ENCODE measurements at regions of chr7 and their contacts with region 1.

Region 1: GRCh38 chr7:36487756-36488336 is 98.2 kb downstream of the ANLN start:
- DNase-seq: peak; percentile 69
- H3K4me3 ChIP-seq: no peak overlapping the region
- H3K27ac ChIP-seq: no peak overlapping the region
- H3K4me1 ChIP-seq: no peaks in the 10 kb centered on the region
- H3K27me3 ChIP-seq: peaks cover 43% of the 10 kb centered on the region

Region 2: DNA sequence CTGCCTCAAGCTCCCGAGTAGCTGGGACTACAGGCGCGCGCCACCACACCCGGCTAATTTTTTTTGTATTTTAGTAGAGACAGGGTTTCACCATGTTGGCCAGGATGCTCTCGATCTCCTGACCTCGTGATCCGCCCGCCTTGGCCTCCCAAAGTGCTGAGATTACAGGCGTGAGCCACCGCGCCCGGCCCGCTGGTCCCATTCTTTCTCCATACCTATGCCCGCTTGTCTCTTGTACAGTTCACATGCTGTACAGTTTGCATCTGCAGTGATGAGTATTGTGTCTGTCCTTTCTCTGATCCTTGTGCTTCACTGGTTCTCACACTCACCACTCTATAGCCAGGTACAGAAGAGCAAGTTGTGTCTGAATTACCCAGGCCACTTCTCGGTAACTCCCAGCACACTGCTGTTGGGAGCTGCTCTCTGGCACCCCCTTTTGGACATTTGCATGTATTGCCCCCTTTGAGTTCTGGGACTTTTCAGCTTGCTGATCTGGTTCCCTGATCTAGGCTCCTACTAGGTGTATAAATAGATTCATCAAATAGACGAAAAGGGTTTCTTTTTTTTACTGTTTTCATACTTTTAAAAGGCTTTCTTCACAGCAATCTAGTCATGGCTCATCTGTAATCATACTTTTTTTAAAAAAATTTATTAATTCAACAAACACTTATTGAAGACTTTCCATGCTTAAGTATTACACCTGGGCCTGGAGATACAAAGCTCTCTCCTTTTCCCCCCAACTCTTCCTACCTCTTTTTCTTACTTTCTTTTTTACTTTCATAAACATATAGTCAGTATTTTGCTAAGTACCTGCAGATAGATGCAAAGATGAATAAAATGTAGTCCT is 183.0 kb after region 1 on chr7:
- in situ Hi-C with region 1: loop called (anchors 10 kb)
- DNase-seq: peak; percentile 69
- H3K4me3 ChIP-seq: no peak overlapping the region
- H3K27ac ChIP-seq: no peak overlapping the region
- H3K4me1 ChIP-seq: peaks cover 15% of the 10 kb centered on the region; the same call in 1 of the 2 replicates
- H3K27me3 ChIP-seq: peaks cover 5% of the 10 kb centered on the region

Region 3: DNA sequence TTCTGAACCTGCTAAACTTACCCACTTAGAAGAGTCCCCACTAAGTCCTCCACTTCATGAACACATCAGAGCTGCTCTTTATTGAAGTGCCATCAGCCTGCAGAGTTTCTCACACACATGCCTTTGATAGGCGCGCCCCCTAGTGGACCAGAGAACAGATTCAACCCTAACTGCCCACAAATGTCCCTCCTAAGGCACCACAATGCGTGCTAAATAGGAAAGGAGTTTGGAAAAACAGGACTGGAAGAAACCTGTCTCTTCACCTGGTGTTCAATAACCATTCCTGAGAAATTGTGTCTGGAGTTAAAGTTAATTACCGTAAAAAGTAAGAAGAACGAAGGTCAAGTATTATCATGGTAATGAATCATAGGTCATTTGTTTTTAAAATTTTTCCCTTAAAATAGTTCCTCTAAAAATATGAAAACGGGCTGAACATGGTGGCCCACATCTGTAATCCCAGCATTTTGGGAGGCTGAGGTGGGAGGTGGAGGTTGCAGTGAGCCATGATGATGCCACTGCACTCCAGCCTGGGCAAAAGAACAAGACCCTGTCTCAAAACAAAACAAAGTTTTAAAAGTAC is 711.1 kb after region 1 on chr7:
- in situ Hi-C with region 1: loop called (anchors 25 kb)
- DNase-seq: peak; percentile 78
- H3K4me3 ChIP-seq: no peak overlapping the region
- H3K27ac ChIP-seq: no peak overlapping the region
- H3K4me1 ChIP-seq: no peaks in the 10 kb centered on the region
- H3K27me3 ChIP-seq: no peaks in the 10 kb centered on the region

Region 4: DNA sequence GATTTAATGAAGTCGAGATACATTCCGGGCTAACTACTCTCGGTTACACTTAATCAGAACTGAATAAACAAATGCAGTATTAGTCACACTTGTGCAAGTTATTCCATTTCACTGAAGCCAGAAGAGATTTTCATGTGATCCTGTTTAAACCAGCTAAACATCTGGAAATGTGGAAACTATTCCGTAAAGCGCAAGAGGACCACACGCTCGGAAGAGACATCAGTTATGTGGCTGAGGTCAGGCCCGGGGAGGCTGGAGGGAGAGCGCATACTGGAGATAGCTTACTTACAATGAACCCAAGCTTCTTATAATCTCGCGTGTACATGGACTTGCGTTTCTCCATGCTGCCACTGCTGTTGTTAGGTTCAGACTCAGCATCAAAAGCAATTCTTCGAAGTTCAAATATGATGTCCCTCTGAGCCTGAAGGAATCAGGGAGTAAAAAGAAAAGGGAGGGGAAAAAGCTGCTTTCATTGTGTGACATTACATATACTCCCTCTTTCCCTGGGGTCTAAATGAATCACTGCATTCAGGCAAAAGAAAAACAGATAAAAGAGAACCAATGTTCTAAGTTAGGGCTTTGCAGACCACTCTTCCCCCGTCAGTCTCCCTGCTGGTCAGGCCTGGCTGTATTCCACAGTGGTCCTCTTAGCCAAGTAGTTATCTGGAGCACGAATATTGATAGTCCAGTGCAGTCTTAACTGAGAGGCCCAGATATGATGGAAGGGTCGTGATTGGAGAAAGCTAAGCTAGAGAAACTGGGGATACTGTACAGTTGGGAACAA is 723.4 kb after region 1 on chr7:
- in situ Hi-C with region 1: no loop called
- DNase-seq: peak; percentile 57
- H3K4me3 ChIP-seq: no peak overlapping the region
- H3K27ac ChIP-seq: no peak overlapping the region
- H3K4me1 ChIP-seq: no peaks in the 10 kb centered on the region
- H3K27me3 ChIP-seq: no peaks in the 10 kb centered on the region

Measured in GM23248 (cell line).